OCI-LY7 (cell line): ENCODE measurements at regions of chr2 and their contacts with region 1.

Region 1: GRCh38 chr2:101717071-101717845 is 19.8 kb downstream of the MAP4K4 start:
- DNase-seq: peak; percentile 94
- H3K4me3 ChIP-seq: peak overlapping the region; percentile 62
- H3K27ac ChIP-seq: peak overlapping the region; percentile 99
- H3K4me1 ChIP-seq: peaks cover 90% of the 10 kb centered on the region
- CTCF ChIP-seq: no peak

Region 2: DNA sequence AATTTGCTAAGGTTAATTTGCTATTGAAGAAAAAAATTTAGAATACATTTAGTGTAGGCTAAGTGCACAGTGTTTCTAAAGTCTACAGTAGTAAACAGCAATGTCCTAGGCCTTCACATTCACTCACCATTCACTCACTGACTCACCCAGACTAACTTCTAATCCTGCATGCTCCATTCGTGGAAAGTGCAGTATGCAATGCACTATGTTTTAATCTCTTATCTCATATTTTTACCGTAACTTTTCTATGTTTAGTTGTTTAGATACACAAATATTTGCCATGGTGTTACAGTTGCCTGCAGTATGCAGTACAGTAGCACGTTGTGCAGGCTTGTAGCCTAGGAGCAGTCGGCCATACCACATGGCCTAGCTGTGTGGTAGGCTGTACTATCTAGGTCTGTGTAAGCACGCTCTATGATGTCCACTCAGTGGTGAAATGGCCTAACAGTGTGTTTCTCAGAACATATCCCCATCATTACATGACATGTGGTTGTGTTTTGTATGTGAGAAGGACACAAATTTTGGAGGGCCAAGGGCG is 224.3 kb before region 1 on chr2:
- CTCF ChIA-PET with region 1: no interaction called
- POLR2A ChIA-PET with region 1: no interaction called
- intact Hi-C with region 1: no loop called
- DNase-seq: no peak
- H3K4me3 ChIP-seq: no peak overlapping the region
- H3K27ac ChIP-seq: no peak overlapping the region
- H3K4me1 ChIP-seq: no peaks in the 10 kb centered on the region
- CTCF ChIP-seq: no peak

Region 3: DNA sequence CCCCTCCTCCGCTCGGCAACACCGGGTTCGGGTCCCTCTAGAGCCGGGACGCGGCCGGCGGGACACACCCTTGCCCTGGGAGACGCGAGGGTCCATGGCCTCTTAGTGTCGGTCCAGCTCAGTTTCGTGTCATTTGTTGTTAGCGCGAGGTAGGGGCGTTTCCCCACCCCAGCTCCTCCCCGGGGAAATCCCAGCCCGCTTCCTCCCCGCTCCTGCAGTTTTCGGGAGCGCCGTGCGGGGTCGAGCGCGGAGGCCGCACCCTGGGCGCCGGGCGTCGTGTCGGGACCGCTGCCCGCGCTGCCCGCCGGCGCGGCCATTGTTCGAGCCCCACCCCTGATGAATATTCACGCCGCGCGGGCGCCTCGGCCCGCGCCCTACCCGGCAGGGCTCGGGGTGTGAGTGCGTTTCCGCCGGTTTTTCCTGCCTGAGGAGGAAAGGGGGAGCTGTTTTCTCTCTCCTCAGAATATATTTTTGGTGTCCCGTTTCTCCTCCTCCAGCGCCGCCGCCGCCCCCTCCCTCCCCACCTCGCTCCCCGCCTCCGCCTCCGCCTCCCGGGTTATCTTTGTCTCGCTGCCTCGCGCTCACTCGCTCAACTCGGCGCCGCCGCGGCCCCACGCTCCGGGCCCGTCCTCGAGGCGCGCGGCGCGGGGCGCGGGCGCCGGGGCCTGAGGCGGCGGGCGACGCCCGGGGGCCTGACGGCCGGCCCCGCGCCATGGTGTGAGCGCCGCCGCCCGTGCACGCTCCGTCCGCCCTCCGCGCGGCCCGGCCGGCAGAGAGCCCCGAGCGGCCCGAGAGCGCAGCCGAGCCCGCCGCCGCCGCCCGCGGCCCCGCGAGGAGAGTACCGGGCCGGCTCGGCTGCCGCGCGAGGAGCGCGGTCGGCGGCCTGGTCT is 19.9 kb before region 1 on chr2 and contains the start of gene MAP4K4:
- CTCF ChIA-PET with region 1: interaction called, 11 read pairs
- POLR2A ChIA-PET with region 1: interaction called, 50 read pairs
- intact Hi-C with region 1: loop called (anchors 1 kb)
- DNase-seq: peak; percentile 87
- H3K4me3 ChIP-seq: peak within 1 kb of the TSS; percentile 93
- H3K27ac ChIP-seq: peak within 1 kb of the TSS; percentile 78
- H3K4me1 ChIP-seq: peaks cover 26% of the 10 kb centered on the region
- CTCF ChIP-seq: peak; percentile 31; the same call in 1 of the 2 replicates
- total RNA-seq, gene MAP4K4: 67.2 and 74.0 TPM in 2 replicates

Region 4: GRCh38 chr2:101704046-101704466 is 13.2 kb before region 1 on chr2:
- CTCF ChIA-PET with region 1: interaction called, 11 read pairs
- POLR2A ChIA-PET with region 1: interaction called, 77 read pairs
- intact Hi-C with region 1: no loop called
- DNase-seq: peak; percentile 43
- H3K4me3 ChIP-seq: peak overlapping the region; percentile 55
- H3K27ac ChIP-seq: peak overlapping the region; percentile 92
- H3K4me1 ChIP-seq: peaks cover 85% of the 10 kb centered on the region
- CTCF ChIP-seq: no peak

Region 5: GRCh38 chr2:101751875-101752619 is 34.8 kb after region 1 on chr2:
- CTCF ChIA-PET with region 1: interaction called, 3 read pairs
- POLR2A ChIA-PET with region 1: interaction called, 19 read pairs
- intact Hi-C with region 1: loop called (anchors 1 kb)
- DNase-seq: peak; percentile 78
- H3K4me3 ChIP-seq: peak overlapping the region; percentile 54
- H3K27ac ChIP-seq: peak overlapping the region; percentile 91
- H3K4me1 ChIP-seq: peaks cover 66% of the 10 kb centered on the region
- CTCF ChIP-seq: no peak

Region 6: GRCh38 chr2:101759162-101759561 is 41.9 kb after region 1 on chr2:
- CTCF ChIA-PET with region 1: interaction called, 3 read pairs
- POLR2A ChIA-PET with region 1: interaction called, 14 read pairs
- intact Hi-C with region 1: loop called (anchors 1 kb)
- DNase-seq: no peak
- H3K4me3 ChIP-seq: no peak overlapping the region
- H3K27ac ChIP-seq: no peak overlapping the region
- H3K4me1 ChIP-seq: peaks cover 53% of the 10 kb centered on the region
- CTCF ChIP-seq: no peak

Region 7: DNA sequence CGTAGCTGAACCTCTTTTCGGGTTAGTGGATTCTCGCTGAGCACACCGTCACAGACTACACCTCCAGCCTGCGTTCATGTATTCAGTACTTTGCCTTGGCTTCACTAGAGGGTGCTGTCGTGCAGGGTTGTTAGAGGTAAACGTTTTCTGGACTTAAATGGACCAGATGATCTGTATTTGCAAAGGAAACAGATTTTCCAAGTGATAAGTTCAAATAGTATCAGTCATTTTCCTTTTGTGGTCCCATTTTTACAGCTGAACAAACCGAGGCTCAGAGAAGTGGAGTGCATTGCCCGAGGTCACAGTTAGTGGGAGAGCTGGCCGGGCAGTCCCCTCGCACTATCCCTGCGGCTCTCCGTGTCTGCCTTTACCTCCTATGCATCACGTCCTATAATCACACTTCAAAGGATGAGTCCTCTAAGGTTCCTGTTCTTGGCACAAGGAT is 106.1 kb after region 1 on chr2:
- CTCF ChIA-PET with region 1: no interaction called
- POLR2A ChIA-PET with region 1: no interaction called
- intact Hi-C with region 1: loop called (anchors 5 kb)
- DNase-seq: peak; percentile 53
- H3K4me3 ChIP-seq: no peak overlapping the region
- H3K27ac ChIP-seq: no peak overlapping the region
- H3K4me1 ChIP-seq: peaks cover 27% of the 10 kb centered on the region
- CTCF ChIP-seq: peak; percentile 79

Region 8: GRCh38 chr2:102138331-102138730 is 421.1 kb after region 1 on chr2:
- CTCF ChIA-PET with region 1: no interaction called
- POLR2A ChIA-PET with region 1: no interaction called
- intact Hi-C with region 1: no loop called
- DNase-seq: no peak
- H3K4me3 ChIP-seq: no peak overlapping the region
- H3K27ac ChIP-seq: no peak overlapping the region
- H3K4me1 ChIP-seq: no peaks in the 10 kb centered on the region
- CTCF ChIP-seq: no peak